Dorsolateral prefrontal cortex (tissue), 120 donors: ENCODE measurements at regions of chr19 and their contacts with region 1.

Region 1: GRCh38 chr19:14689598-14690503 is at the start of gene ZNF333:
- DNase-seq: peak; percentile 91 to 97 (median 94)
- H3K4me3 ChIP-seq: peak within 1 kb of the TSS; percentile 62 to 100 (median 93)
- H3K27ac ChIP-seq: peak within 1 kb of the TSS in 58 of 59 donors; percentile 63 to 99 (median 96)
- H3K27me3 ChIP-seq: no peaks in the 10 kb centered on the region
- CTCF ChIP-seq: peak in 13 of 56 donors; percentile 5 to 36 (median 24)
- total RNA-seq, gene ZNF333: 21.3 to 44.2 (median 30.8) TPM

Region 2: GRCh38 chr19:14577885-14578427 is 111.9 kb before region 1 on chr19:
- intact Hi-C with region 1: loop called (anchors 2 to 5 kb)
- DNase-seq: no peak
- H3K4me3 ChIP-seq: no peak overlapping the region
- H3K27ac ChIP-seq: no peak overlapping the region
- H3K27me3 ChIP-seq: no peaks in the 10 kb centered on the region
- CTCF ChIP-seq: no peak

Region 3: GRCh38 chr19:15125232-15126067 is 435.6 kb after region 1 on chr19:
- intact Hi-C with region 1: loop called in 1 of 2 experiments (anchors 5 kb)
- DNase-seq: peak; percentile 95 to 98 (median 97)
- H3K4me3 ChIP-seq: peak overlapping the region; percentile 51 to 100 (median 90)
- H3K27ac ChIP-seq: peak overlapping the region; percentile 62 to 99 (median 94)
- H3K27me3 ChIP-seq: no peaks in the 10 kb centered on the region
- CTCF ChIP-seq: peak in 37 of 56 donors; percentile 5 to 60 (median 30)